ENCODE measurements at regions of chr13 and their contacts with region 1.

Region 1: GRCh38 chr13:70098669-70099068 is 9.0 kb upstream of the ATXN8OS start:
- DNase-seq: peak; percentile 8
- H3K4me3 ChIP-seq: no peak overlapping the region
- H3K27ac ChIP-seq: no peak overlapping the region
- H3K4me1 ChIP-seq: no peaks in the 10 kb centered on the region
- H3K27me3 ChIP-seq: no peaks in the 10 kb centered on the region
- CTCF ChIP-seq: peak; percentile 63
- EP300 ChIP-seq: no peak
- RAD21 ChIP-seq: peak; percentile 57

Region 2: DNA sequence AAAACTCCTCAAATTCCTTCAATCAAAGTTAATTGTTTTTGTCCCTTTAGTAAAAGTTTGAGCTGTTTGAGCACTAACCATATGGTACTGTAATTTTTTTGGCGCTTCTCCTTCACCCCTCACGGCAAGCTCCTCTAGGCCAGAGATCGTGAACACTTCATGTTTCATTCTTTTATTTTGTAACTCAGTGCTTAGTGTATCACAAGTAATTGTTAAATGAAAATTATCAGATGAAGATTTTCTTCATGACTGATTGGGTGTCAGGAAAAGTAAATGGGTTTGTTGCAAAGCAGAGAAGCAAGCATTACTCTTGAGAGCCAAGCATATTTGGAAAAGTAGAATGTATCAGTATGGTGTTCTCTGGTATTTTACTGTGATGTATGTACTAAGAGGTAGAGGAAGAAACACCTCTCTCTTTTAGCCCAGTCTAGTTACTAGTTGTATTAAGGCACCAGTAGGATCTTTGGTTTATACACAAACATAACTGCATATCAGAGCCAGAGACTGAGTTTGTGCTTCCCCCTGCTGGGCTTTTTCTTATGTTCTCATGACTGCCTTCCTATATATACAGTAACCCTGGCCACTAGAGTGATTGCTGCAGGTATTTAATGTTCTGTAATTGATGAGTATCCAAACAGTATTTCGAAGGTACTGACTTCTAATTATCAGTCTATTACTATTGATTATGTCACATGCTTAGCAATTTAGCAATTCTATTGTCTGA is 211.9 kb after region 1 on chr13:
- CTCF ChIA-PET with region 1: interaction called, 41 read pairs
- POLR2A ChIA-PET with region 1: no interaction called
- DNase-seq: peak; percentile 48
- H3K4me3 ChIP-seq: no peak overlapping the region
- H3K27ac ChIP-seq: no peak overlapping the region
- H3K4me1 ChIP-seq: no peaks in the 10 kb centered on the region
- H3K27me3 ChIP-seq: no peaks in the 10 kb centered on the region
- CTCF ChIP-seq: peak; percentile 55
- EP300 ChIP-seq: no peak
- RAD21 ChIP-seq: peak; percentile 77